ENCODE measurements at regions of chr1 and their contacts with region 1.

Region 1: GRCh38 chr1:71049951-71050598 is 2.5 kb upstream of the PTGER3 start:
- DNase-seq: peak; percentile 43 to 82 (median 58)
- ATAC-seq: no peak
- H3K4me3 ChIP-seq: no peak overlapping the region
- H3K27ac ChIP-seq: no peak overlapping the region
- H3K4me1 ChIP-seq: peaks cover 4 to 23% of the 10 kb centered on the region in 2 experiments; a peak in 4 of 5 replicates
- H3K27me3 ChIP-seq: no peaks in the 10 kb centered on the region; a peak in 1 of 5 replicates
- CTCF ChIP-seq: peak; percentile 59 to 89 (median 70); a peak in 5 of 6 replicates
- EP300 ChIP-seq: no peak
- POLR2A ChIP-seq: no peak
- RAD21 ChIP-seq: peak; percentile 95 to 97

Region 2: DNA sequence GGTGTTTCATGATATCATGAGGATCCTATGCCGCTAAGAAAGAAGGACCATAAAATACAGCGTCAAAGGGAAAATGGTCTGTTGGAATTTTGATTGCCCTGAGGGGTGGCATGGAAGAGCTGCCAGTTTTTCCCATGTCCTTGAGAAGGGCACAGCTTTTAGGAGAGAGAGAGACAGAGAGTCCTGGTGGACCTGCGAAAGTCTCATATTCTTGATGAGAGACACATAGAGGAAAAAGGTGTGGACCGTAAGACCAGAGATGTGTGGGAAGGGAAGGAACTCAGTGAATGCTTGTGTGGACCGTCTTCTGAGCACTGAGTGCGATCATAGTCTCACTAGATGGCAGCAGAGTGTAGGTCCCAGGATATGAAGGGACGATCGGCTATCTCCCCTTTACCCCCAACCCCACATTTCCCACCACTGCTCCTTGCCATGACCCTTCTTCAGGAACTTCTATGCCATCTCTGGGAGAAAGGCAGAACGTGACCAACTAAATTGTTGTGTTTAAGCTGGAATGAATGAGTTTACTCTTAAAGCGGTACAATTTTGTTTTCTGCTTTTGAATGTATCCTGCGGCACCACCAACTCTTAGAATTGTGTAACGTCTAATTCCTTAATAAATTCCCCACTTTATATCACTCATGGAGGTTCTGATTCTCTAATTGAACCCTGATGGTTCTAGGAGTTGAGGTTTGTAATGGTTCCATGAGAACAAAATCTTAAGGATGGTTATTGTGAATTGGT is 521.3 kb before region 1 on chr1:
- CTCF ChIA-PET with region 1: interaction called, 10 read pairs
- POLR2A ChIA-PET with region 1: no interaction called
- in situ Hi-C with region 1: loop called (anchors 5 kb)
- intact Hi-C with region 1: loop called (anchors 1 kb)
- DNase-seq: peak; percentile 33 to 76 (median 48)
- ATAC-seq: peak; percentile 98
- H3K4me3 ChIP-seq: no peak overlapping the region
- H3K27ac ChIP-seq: no peak overlapping the region
- H3K4me1 ChIP-seq: no peaks in the 10 kb centered on the region; a peak in 1 of 5 replicates
- H3K27me3 ChIP-seq: no peaks in the 10 kb centered on the region
- CTCF ChIP-seq: peak; percentile 76 to 79 (median 78)
- EP300 ChIP-seq: no peak
- POLR2A ChIP-seq: no peak
- RAD21 ChIP-seq: peak; percentile 85 to 93

Region 3: DNA sequence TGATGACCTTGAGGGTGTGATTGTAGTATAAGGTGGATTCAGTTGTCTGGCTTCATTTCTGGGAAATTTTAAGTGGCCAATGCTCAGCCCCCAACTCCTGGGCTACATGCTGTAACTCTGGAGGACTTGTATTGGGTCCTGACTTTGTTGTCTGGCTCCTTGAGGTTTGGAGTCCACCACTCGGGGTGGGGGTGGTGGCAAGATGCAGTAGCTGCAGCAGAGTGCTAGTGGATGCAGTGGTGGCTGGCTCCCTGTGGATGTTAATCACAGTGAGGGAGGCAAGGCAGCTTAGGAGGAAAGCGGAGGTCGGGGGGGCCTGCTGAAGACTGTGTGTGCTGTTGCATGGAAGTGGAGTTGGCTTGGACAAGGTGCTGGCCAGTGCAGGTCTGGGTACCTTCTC is 297.6 kb before region 1 on chr1:
- CTCF ChIA-PET with region 1: no interaction called
- POLR2A ChIA-PET with region 1: no interaction called
- in situ Hi-C with region 1: no loop called
- intact Hi-C with region 1: loop called (anchors 10 kb)
- DNase-seq: peak in 3 of 4 experiments; percentile 13 to 35 (median 14)
- ATAC-seq: peak; percentile 68
- H3K4me3 ChIP-seq: no peak overlapping the region
- H3K27ac ChIP-seq: peak overlapping the region; percentile 68
- H3K4me1 ChIP-seq: peaks cover 23 to 35% of the 10 kb centered on the region in 2 experiments
- H3K27me3 ChIP-seq: no peaks in the 10 kb centered on the region
- CTCF ChIP-seq: no peak
- EP300 ChIP-seq: no peak
- POLR2A ChIP-seq: no peak
- RAD21 ChIP-seq: 0 out of 4 replicates have a peak, but pooled peaks of 1 of the 2 experiments have one; percentile 4

Region 4: GRCh38 chr1:70896224-70896623 is 153.9 kb before region 1 on chr1:
- CTCF ChIA-PET with region 1: no interaction called
- POLR2A ChIA-PET with region 1: no interaction called
- in situ Hi-C with region 1: no loop called
- intact Hi-C with region 1: loop called (anchors 5 kb)
- DNase-seq: no peak
- ATAC-seq: peak; percentile 80
- H3K4me3 ChIP-seq: no peak overlapping the region
- H3K27ac ChIP-seq: no peak overlapping the region
- H3K4me1 ChIP-seq: peaks cover 0 to 24% of the 10 kb centered on the region in 2 experiments; a peak in 3 of 5 replicates
- H3K27me3 ChIP-seq: no peaks in the 10 kb centered on the region
- CTCF ChIP-seq: peak; percentile 30 to 52 (median 36); a peak in 4 of 6 replicates
- EP300 ChIP-seq: no peak
- POLR2A ChIP-seq: no peak
- RAD21 ChIP-seq: peak; percentile 30 to 68; a peak in 3 of 4 replicates

Region 5: DNA sequence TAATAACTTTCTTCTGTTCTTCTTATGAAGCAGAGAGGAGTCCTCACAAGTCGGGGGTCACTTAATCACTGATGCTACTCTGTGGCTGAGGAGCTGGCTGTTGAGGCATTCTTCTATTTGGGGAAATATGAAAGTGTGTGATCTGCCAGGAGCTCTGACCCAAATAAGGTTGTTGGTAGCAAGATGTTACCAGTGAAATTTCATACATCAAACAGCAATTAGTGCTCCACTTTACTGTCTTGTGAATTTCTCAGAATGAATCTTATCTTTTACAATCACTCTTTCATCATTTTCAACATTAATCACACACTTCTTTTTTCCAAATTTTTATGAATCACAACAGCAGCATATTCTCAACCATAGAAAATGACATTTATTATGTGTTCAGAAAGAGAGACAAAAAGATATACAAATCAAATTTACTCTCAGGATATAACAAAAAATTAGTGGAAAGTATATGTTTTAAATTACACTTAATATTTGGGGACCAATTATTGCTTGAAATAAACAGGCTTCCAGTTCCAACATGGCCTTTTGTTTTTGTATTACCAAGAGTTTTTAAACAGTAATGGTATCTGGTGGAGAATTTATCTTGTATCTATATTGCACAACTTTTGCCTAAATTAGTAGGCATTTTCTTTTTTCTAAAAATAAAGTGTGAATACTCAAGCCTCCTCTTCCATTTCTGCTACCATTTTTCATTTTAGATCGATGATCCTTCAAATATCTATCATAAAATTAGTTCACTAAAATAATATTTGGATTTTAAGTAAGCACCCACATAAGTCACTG is 12.1 kb before region 1 on chr1:
- CTCF ChIA-PET with region 1: no interaction called
- POLR2A ChIA-PET with region 1: interaction called, 16 read pairs
- in situ Hi-C with region 1: no loop called
- intact Hi-C with region 1: no loop called
- DNase-seq: no peak
- ATAC-seq: no peak
- H3K4me3 ChIP-seq: no peak overlapping the region
- H3K27ac ChIP-seq: no peak overlapping the region
- H3K4me1 ChIP-seq: peaks cover 0 to 40% of the 10 kb centered on the region in 2 experiments
- H3K27me3 ChIP-seq: no peaks in the 10 kb centered on the region
- CTCF ChIP-seq: no peak
- EP300 ChIP-seq: no peak
- POLR2A ChIP-seq: no peak
- RAD21 ChIP-seq: no peak

Region 6: GRCh38 chr1:71695821-71696220 is 645.7 kb after region 1 on chr1:
- CTCF ChIA-PET with region 1: no interaction called
- POLR2A ChIA-PET with region 1: no interaction called
- in situ Hi-C with region 1: no loop called
- intact Hi-C with region 1: no loop called
- DNase-seq: no peak
- ATAC-seq: no peak
- H3K4me3 ChIP-seq: no peak overlapping the region
- H3K27ac ChIP-seq: no peak overlapping the region
- H3K4me1 ChIP-seq: no peaks in the 10 kb centered on the region
- H3K27me3 ChIP-seq: no peaks in the 10 kb centered on the region
- CTCF ChIP-seq: no peak
- EP300 ChIP-seq: no peak
- POLR2A ChIP-seq: no peak
- RAD21 ChIP-seq: no peak